Activated CD8-positive, alpha-beta T cell treated with anti-CD3 and anti-CD28 coated beads for 36 hours (primary cell): ENCODE measurements at regions of chr18 and their contacts with region 1.

Region 1: DNA sequence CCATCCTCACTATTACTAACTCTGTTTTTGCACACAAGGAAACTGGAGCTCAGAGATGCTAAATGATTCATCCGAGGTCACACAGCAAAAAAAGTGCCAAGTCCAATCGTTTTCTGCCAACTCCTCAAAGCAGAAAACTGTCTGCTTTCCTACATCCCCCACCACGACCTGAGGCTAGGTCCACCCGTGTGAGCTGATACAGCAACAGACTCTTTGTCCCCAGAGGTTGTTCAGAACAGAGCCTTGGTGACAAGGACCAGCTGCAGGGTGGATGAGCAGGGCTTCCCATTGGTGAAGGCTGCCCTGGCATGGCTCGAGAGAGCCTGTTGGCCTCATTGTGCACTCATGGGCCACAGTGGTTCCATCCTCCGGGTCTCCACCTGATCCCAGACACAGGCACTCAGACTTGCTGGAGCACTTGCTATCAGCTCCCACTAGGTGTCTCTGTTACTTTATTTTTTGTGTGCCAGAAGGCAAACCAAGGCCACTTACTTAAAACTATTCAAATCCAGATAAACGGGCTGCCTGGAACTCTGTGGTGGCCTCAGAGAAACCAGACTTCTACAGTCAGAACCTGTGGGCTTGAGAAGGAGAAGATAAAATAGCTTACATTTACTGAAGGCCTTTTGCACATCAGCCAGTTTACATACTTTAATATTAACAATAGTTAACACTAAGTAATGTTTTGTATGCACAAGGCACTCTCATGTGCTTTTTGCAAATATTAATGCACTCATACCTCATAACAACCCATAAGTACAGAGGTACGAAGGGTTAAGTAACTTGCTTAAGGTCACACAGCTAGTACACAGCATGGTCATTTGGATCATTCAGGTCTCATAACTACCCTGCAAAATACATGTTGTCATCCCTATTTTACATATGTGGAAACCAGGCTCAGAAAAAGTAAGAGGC is 62.9 kb upstream of the CTIF start:
- DNase-seq: peak; percentile 29
- ATAC-seq: peak; percentile 51
- H3K4me3 Mint-ChIP-seq: no peak overlapping the region
- H3K27ac Mint-ChIP-seq: no peak overlapping the region
- H3K4me1 Mint-ChIP-seq: no peaks in the 10 kb centered on the region
- H3K27me3 Mint-ChIP-seq: peaks cover 23% of the 10 kb centered on the region
- CTCF ChIP-seq: peak; percentile 74

Region 2: GRCh38 chr18:48486754-48487153 is 10.9 kb after region 1 on chr18:
- CTCF ChIA-PET with region 1: interaction called, 16 read pairs
- POLR2A ChIA-PET with region 1: no interaction called
- intact Hi-C with region 1: no loop called
- DNase-seq: no peak
- ATAC-seq: no peak
- H3K4me3 Mint-ChIP-seq: no peak overlapping the region
- H3K27ac Mint-ChIP-seq: no peak overlapping the region
- H3K4me1 Mint-ChIP-seq: no peaks in the 10 kb centered on the region
- H3K27me3 Mint-ChIP-seq: peaks cover 23% of the 10 kb centered on the region
- CTCF ChIP-seq: no peak

Region 3: DNA sequence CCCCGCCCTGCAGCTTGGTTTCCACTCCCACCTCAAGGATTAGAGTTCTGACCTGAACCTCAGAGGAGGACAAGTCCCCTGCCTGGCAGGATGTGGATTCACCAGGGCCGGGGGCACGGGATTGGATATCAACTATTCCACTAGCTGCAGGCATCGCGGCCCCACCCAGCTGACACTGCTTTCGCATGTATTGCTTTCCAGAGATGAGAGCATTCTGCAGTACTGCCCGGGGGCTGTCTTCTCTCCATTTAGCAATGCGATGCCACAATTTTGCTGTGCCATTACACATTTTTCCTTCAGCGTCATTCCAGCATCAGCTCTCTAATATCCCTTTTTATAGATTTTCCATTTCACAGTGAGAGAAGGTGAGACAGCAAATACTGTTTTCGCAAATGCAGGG is 104.9 kb after region 1 on chr18:
- CTCF ChIA-PET with region 1: no interaction called
- POLR2A ChIA-PET with region 1: no interaction called
- intact Hi-C with region 1: no loop called
- DNase-seq: no peak
- ATAC-seq: no peak
- H3K4me3 Mint-ChIP-seq: no peak overlapping the region
- H3K27ac Mint-ChIP-seq: no peak overlapping the region
- H3K4me1 Mint-ChIP-seq: no peaks in the 10 kb centered on the region
- H3K27me3 Mint-ChIP-seq: no peaks in the 10 kb centered on the region
- CTCF ChIP-seq: no peak

Region 4: DNA sequence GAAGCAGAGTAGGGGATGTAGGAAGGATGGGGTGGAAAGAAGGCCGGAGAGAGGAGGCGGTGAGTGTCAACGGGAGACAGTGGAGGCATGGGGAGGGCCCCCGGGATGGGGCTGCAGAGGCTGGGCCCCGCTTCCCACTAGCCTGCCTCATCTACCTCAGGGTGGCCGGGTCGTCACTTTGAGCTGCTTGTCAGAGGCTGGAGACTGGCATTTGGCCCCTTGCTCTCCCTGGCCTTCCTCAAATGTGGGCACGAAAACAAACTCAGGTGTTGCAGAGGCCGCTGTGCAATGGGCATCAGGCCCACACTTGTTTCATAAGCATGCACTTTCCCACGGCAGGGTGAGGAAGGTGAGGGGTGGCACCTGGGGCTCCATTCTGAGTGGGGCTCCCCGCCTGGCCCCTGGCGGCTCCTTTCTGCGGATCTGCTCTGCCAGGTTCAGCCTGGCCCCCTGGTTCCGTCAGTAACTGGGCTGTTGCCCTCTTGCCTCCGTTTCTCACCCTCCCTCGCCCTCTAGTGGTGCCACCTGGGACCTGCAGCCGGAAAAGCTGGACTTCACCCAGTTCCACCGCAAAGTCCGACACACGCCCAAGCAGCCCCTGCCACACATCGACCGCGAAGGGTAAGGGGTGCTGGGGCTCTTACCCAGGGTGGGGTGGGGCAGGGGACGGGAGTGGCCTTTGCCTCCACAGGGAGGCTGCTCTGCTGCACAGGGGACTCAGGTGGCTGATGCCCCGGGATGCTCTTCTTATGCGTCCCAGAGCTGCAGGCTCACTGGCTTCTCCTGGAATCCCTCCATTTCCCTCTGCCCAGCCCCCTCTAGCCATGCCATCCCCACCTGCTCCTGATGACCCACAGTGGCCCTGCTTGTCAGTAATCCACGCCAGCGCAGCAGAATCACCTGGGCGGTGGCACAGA is 188.3 kb after region 1 on chr18:
- CTCF ChIA-PET with region 1: interaction called, 15 read pairs
- POLR2A ChIA-PET with region 1: no interaction called
- intact Hi-C with region 1: loop called (anchors 2 kb)
- DNase-seq: peak; percentile 64
- ATAC-seq: peak; percentile 60
- H3K4me3 Mint-ChIP-seq: no peak overlapping the region
- H3K27ac Mint-ChIP-seq: no peak overlapping the region
- H3K4me1 Mint-ChIP-seq: no peaks in the 10 kb centered on the region
- H3K27me3 Mint-ChIP-seq: peaks cover 3% of the 10 kb centered on the region
- CTCF ChIP-seq: peak; percentile 87

Region 5: GRCh38 chr18:49139766-49140165 is 663.9 kb after region 1 on chr18:
- CTCF ChIA-PET with region 1: no interaction called
- POLR2A ChIA-PET with region 1: no interaction called
- intact Hi-C with region 1: no loop called
- DNase-seq: no peak
- ATAC-seq: no peak
- H3K4me3 Mint-ChIP-seq: no peak overlapping the region
- H3K27ac Mint-ChIP-seq: no peak overlapping the region
- H3K4me1 Mint-ChIP-seq: no peaks in the 10 kb centered on the region
- H3K27me3 Mint-ChIP-seq: no peaks in the 10 kb centered on the region
- CTCF ChIP-seq: no peak